Head of caudate nucleus (tissue), 42 donors: ENCODE measurements at regions of chr5 and their contacts with region 1.

Region 1: GRCh38 chr5:151659001-151659754 is 27.5 kb downstream of the SPARC start:
- DNase-seq: peak; percentile 73 to 96 (median 90)

Region 2: DNA sequence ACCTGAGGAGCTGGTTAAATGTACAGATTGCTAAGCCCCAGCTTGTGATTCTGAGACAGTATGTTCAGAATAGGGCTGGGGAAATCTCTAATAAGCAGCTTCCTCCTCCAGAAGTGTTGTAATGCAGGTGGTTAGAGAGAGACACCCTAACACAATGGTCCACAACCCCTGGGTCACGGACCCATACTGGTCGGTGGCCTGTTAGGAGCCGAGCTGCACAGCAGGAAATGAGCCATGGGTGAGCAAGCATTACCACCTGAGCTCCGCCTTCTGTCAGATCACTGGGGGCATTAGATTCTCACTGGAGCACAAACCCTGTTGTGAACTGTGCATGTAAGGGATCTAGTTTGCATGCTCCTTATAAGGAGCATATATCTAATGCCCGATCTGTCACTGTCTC is 149.9 kb before region 1 on chr5:
- intact Hi-C with region 1: loop called (anchors 10 kb)
- DNase-seq: no peak

Region 3: DNA sequence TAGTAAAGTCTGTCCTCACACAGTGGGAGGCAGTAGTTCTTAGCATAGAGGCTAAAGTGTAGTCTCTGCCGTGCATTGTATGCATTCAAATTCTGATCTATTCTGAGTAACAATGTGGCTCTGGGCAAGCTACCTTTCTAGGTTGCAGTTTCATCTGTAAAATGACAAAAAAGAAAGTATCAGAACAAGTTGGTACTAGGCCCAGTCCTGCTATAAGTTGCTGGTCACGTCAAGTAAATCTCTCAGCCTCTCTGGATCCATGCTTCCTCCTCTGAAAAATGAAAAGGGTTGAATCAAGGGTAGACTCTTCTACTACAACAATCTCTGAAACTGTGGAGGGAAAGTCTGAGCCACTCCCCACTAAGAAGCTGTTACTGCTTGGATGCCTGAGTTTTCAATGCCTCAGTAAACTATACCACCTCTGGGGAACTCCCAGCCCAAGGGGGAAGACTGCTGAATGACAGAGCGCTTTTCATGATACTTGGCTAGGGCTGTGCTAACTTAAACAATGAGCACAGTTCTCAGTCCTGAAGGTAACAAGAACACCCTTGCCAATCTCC is 62.0 kb after region 1 on chr5:
- intact Hi-C with region 1: loop called (anchors 5 kb)
- DNase-seq: no peak

Region 4: DNA sequence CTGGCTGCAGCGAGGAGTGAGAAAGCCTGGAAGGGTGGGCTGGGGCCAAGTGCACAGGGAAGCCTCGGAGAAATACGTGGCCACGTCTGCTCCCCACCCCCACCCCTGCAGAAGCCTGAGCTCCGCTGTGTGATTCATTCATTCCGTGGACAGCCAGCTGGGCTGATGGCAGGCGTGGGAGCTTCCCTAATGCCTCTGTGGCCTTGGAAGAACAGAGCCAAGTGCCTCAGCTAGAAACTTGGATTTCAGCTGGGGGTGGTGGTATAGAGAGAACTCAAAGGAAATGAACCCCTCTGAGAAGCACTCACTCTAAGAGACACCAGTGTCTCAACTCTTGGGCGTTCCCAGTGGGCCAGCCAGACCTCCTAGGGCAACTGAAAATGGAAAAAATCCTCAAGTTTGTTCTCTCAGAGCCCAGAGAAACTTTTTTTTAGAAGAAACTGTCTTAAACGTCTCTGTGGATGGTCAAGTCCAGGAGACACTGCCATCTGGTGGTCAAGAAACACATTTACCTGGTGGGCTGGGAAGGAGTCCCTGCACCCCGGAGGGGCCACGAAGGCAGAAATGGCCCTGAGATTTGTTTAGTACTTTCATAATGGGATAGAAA is 81.3 kb after region 1 on chr5:
- intact Hi-C with region 1: loop called (anchors 1 kb)
- DNase-seq: peak in 38 of 42 donors; percentile 17 to 86 (median 62)